IMR-90 (cell line): ENCODE measurements at regions of chrX and their contacts with region 1.

Region 1: GRCh38 chrX:40083120-40083978 is 14.4 kb downstream of the BCOR start:
- DNase-seq: no peak
- ATAC-seq: no peak
- H3K4me3 ChIP-seq: peak overlapping the region; percentile 20
- H3K27ac ChIP-seq: no peak overlapping the region
- H3K4me1 ChIP-seq: peaks cover 19% of the 10 kb centered on the region
- H3K27me3 ChIP-seq: no peaks in the 10 kb centered on the region
- CTCF ChIP-seq: no peak
- POLR2A ChIP-seq: no peak
- RAD21 ChIP-seq: no peak

Region 2: GRCh38 chrX:38803586-38804431 is 1279.5 kb before region 1 on chrX:
- CTCF ChIA-PET with region 1: no interaction called
- POLR2A ChIA-PET with region 1: no interaction called
- dilution Hi-C with region 1: no loop called
- in situ Hi-C with region 1: no loop called
- intact Hi-C with region 1: loop called (anchors 5 kb)
- DNase-seq: peak; percentile 34
- ATAC-seq: peak; percentile 74
- H3K4me3 ChIP-seq: peak overlapping the region; percentile 91
- H3K27ac ChIP-seq: peak overlapping the region; percentile 96
- H3K4me1 ChIP-seq: peaks cover 3% of the 10 kb centered on the region; the same call in 1 of the 2 replicates
- H3K27me3 ChIP-seq: no peaks in the 10 kb centered on the region
- CTCF ChIP-seq: no peak
- POLR2A ChIP-seq: 0 out of 2 replicates have a peak, but pooled peaks have one; percentile 42
- RAD21 ChIP-seq: no peak

Region 3: GRCh38 chrX:39730662-39731397 is 352.5 kb before region 1 on chrX:
- CTCF ChIA-PET with region 1: no interaction called
- POLR2A ChIA-PET with region 1: no interaction called
- dilution Hi-C with region 1: no loop called
- in situ Hi-C with region 1: loop called (anchors 10 kb)
- intact Hi-C with region 1: loop called (anchors 5 kb)
- DNase-seq: peak; percentile 88
- ATAC-seq: peak; percentile 81
- H3K4me3 ChIP-seq: no peak overlapping the region
- H3K27ac ChIP-seq: no peak overlapping the region
- H3K4me1 ChIP-seq: peaks cover 10% of the 10 kb centered on the region
- H3K27me3 ChIP-seq: peaks cover 21% of the 10 kb centered on the region
- CTCF ChIP-seq: peak; percentile 77
- POLR2A ChIP-seq: peak; percentile 43; the same call in 1 of the 2 replicates
- RAD21 ChIP-seq: peak; percentile 85

Region 4: DNA sequence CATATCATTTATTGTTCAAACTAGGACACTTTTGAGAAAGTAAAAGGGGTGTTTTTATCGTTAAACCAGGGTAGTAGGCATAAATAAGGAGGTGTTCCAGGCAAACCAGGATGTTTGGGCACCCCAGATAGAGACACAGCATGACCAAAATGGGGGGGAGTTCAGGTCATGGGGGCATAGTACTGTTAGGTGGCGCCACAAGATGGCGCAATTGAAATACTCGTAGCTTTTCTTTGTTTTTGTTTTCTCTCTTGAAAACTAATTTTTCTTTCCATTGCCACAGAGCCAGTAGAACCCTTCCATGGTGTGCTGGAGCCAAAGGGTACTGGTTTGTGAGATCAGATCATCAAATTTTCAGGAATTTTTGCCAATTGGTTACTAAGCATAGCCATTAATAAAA is 269.0 kb before region 1 on chrX:
- CTCF ChIA-PET with region 1: interaction called, 5 read pairs
- POLR2A ChIA-PET with region 1: no interaction called
- dilution Hi-C with region 1: no loop called
- in situ Hi-C with region 1: loop called (anchors 10 kb)
- intact Hi-C with region 1: no loop called
- DNase-seq: peak; percentile 23
- ATAC-seq: peak; percentile 13; the same call in 1 of the 2 replicates
- H3K4me3 ChIP-seq: no peak overlapping the region
- H3K27ac ChIP-seq: no peak overlapping the region
- H3K4me1 ChIP-seq: peaks cover 3% of the 10 kb centered on the region; the same call in 1 of the 2 replicates
- H3K27me3 ChIP-seq: peaks cover 4% of the 10 kb centered on the region; the same call in 1 of the 2 replicates
- CTCF ChIP-seq: peak; percentile 47
- POLR2A ChIP-seq: no peak
- RAD21 ChIP-seq: peak; percentile 61